ENCODE measurements at regions of chr19 and their contacts with region 1.

Region 1: DNA sequence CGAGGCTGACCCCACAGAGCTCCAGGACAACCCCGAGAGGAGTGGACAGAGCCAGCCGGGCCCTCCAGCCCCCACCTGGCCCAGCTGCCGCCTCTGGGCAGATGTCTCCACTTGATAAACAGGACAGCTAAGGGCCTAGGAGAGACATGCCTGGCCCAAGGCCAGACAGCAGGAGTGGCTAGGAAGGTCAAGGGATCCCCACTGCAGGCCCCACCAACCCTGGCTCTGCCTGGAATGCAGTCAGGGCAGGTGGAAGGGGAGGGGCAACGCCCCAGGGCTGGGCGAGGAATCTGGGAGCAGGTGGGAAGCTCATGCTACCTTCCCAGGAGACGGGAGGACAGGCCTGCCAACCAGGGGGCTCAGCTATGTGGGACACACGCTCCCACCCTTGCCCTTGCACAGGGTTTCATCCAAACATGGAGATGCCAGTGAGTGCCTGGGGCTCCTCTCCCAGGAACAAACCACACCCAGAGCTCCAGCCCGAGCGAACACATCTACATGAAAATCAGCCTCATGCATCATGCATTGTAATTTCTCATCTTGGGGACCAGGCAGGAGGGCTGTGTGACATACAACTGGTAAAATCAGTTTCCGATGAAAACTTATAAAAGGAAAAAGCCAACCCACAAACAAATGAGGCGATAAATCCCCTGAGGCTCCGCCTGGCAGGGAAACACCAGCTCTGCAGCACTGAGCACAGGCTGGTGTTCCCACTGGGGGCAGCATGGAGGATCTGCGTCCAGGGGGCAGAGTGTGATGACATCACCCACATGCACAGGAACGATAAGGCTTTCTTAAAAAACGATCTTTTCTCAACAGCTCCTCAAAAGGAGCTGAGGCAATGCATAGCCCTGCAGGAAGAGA is 25.0 kb downstream of the SH3GL1 start:
- DNase-seq: peak; percentile 62
- H3K4me3 ChIP-seq: no peak overlapping the region
- H3K27ac ChIP-seq: peak overlapping the region; percentile 51
- H3K4me1 ChIP-seq: peaks cover 49% of the 10 kb centered on the region
- H3K27me3 ChIP-seq: no peaks in the 10 kb centered on the region
- CTCF ChIP-seq: peak; percentile 52 to 68
- POLR2A ChIP-seq: no peak

Region 2: GRCh38 chr19:4342615-4343369 is 32.6 kb before region 1 on chr19:
- CTCF ChIA-PET with region 1: interaction called, 8 read pairs
- POLR2A ChIA-PET with region 1: interaction called, 3 read pairs
- dilution Hi-C with region 1: no loop called
- intact Hi-C with region 1: loop called (anchors 1 kb)
- DNase-seq: peak; percentile 100
- H3K4me3 ChIP-seq: peak overlapping the region; percentile 55 to 85 (median 84)
- H3K27ac ChIP-seq: peak overlapping the region; percentile 77
- H3K4me1 ChIP-seq: peaks cover 16% of the 10 kb centered on the region
- H3K27me3 ChIP-seq: no peaks in the 10 kb centered on the region
- CTCF ChIP-seq: peak in 1 of 2 donors; percentile 47
- POLR2A ChIP-seq: peak; percentile 96

Region 3: DNA sequence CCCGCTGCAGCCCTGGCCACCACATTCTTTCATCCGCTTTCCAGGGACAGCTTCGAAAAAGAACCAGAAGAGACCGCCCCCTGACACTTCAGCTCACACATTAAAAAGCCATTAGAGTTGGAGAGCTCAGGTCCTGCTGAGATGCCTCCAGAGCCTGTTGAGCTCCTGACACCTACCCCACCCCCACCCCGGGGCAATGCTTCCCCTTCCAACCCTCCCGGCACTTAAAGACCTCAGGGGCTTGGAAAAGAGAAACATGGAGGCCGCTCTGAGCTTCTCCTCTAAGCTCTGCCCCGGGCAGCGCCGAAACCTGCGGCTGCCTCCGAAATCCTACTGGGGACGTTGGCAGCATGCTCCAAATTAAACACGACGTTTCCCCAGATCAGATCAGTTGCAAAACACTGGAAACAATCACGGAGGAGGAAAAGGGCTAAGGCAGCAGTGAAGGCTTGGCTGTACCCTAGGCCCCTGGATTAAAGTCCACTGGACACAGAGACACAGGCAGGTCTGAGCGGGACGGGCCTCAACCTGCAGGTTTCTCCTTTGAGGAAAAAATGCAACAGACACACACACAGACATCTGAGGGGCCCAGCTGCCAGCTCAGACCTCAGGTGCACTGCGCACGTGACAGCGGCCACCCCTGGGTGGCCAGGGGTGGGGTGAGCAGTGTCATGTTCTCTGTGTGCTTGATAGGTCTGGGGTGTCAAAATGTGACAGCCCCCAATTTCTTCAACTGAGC is 15.3 kb after region 1 on chr19:
- CTCF ChIA-PET with region 1: interaction called, 105 read pairs
- POLR2A ChIA-PET with region 1: interaction called, 3 read pairs
- dilution Hi-C with region 1: no loop called
- intact Hi-C with region 1: loop called (anchors 1 kb)
- DNase-seq: peak; percentile 50
- H3K4me3 ChIP-seq: peak overlapping the region in 1 of 3 experiments; percentile 1
- H3K27ac ChIP-seq: peak overlapping the region; percentile 88
- H3K4me1 ChIP-seq: peaks cover 68% of the 10 kb centered on the region
- H3K27me3 ChIP-seq: no peaks in the 10 kb centered on the region
- CTCF ChIP-seq: no peak
- POLR2A ChIP-seq: peak; percentile 43

Region 4: DNA sequence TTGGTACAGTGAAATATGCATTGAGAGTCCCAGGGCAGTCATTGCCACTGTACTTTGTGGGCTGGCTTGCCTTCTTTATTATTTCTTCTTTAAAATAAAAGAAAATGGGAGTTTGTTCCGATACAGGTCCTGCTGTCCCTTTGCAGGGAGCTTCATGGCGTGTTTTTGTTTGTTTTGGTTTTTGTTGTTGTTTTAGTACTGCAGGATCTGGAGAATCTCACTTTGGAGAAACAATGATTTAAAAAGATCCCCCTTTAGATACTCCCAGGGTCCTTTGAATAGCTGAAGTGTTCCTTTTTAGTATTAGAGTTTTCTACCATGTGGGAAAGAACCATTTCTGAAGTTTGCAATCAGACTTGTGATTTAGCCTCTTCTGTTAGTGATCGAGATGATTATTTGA is 38.2 kb after region 1 on chr19:
- CTCF ChIA-PET with region 1: no interaction called
- POLR2A ChIA-PET with region 1: no interaction called
- dilution Hi-C with region 1: no loop called
- intact Hi-C with region 1: no loop called
- DNase-seq: no peak
- H3K4me3 ChIP-seq: no peak overlapping the region
- H3K27ac ChIP-seq: no peak overlapping the region
- H3K4me1 ChIP-seq: no peaks in the 10 kb centered on the region
- H3K27me3 ChIP-seq: no peaks in the 10 kb centered on the region
- CTCF ChIP-seq: no peak
- POLR2A ChIP-seq: no peak

Measured in endothelial cell of umbilical vein (primary cell).